ENCODE measurements at regions of chr17 and their contacts with region 1.

Region 1: DNA sequence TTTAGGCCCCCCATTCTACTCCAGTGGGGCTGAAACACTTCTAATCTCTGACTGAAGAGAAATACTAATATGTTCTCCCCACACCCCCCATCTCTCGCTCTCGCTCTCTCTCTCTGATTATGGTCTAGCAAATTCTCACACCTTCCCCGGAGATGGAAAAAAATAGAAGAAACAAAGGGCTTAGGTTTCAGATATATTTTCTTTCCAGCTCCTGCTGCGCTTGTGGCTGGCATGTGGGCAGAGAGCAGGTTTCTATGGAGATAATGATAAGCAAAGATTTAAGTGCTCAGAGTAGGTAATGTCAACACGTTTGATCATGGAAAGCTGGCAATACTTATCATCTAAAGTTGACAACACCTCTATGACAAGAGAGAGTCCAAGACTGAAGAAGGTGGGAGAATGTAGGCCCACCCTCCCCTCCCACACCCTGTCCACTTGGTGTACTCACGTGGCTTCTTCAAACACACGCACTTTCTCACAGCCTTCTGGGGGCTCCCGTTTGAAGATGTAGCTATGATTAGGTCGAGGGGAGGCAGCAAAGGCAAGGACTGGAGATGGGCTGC is 8.0 kb upstream of the SLC35B1 start:
- DNase-seq: peak; percentile 74
- H3K4me3 Mint-ChIP-seq: peak overlapping the region; percentile 27
- H3K27ac Mint-ChIP-seq: peak overlapping the region; percentile 97
- H3K4me1 Mint-ChIP-seq: peaks cover 43% of the 10 kb centered on the region
- H3K27me3 Mint-ChIP-seq: no peaks in the 10 kb centered on the region

Region 2: DNA sequence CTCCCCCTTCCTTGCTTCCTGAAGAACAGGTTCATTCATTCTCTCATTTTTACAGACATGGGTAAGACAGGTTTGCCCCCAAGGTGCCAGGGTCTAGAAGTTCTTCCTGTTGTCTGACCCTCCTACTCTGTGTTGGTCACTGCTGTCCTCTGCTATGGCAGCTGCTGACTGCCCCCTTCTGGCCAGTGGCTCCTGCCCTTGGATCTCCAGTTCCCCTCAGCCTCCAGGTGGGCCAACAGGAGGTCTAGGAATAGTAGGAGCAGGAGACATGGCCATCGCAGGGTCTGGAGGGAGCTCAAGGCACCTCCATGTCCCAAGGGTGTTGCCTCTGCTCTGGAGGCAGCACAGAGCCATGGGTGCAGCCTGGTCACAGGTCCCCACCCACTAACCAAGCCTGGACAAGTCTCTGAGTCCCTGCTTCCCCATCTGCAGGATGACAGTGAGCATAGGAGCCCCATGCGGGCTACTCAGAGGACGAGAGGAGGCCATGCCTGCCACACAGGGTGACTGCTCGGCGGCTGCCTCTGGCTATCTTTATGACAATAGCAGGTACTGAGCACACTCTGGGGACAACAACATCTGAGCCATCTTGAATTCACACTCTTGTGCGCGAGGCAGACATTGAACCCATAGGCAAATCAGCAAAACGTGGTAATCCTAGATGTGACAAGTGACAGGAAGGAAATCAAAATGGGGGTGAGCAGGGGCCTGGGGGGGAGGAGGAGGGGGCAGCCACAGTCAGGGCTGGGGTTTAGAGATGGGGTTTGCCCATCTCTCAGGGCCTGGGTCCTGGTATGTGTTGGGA is 167.1 kb before region 1 on chr17:
- CTCF ChIA-PET with region 1: no interaction called
- POLR2A ChIA-PET with region 1: no interaction called
- intact Hi-C with region 1: no loop called
- DNase-seq: peak; percentile 37
- H3K4me3 Mint-ChIP-seq: no peak overlapping the region
- H3K27ac Mint-ChIP-seq: no peak overlapping the region
- H3K4me1 Mint-ChIP-seq: no peaks in the 10 kb centered on the region
- H3K27me3 Mint-ChIP-seq: peaks cover 1% of the 10 kb centered on the region

Region 3: DNA sequence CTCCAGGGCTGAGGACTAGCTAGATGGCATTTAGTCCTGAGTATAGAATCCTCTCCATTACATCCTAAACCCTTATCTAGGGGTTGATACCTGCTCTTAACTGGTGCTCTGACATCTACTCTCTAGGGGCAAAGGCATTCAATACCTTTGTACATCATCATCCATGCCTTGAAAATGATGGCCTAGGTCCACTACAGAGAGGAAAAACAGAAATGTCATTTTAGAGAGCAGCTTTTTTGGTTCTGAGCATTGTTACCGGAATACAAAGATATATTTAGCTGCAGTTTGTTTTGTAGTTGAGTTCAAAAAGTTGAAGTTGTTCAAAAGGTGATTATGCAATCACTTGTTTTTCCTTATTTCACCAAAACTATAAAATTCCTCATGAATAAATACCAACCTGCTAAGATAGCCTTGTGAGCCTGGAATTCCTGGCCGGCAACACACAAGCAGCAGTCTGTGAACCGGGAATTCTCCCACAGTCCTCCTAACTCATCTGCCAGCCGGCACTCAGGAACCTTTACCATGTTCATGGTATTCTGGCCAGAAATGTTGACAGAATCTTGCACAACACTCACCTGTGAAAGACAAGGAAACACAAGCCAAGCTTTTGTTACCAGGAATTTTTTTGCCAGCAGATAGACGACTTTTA is 104.8 kb before region 1 on chr17:
- CTCF ChIA-PET with region 1: no interaction called
- POLR2A ChIA-PET with region 1: no interaction called
- intact Hi-C with region 1: no loop called
- DNase-seq: no peak
- H3K4me3 Mint-ChIP-seq: no peak overlapping the region
- H3K27ac Mint-ChIP-seq: no peak overlapping the region
- H3K4me1 Mint-ChIP-seq: peaks cover 5% of the 10 kb centered on the region
- H3K27me3 Mint-ChIP-seq: no peaks in the 10 kb centered on the region

Region 4: DNA sequence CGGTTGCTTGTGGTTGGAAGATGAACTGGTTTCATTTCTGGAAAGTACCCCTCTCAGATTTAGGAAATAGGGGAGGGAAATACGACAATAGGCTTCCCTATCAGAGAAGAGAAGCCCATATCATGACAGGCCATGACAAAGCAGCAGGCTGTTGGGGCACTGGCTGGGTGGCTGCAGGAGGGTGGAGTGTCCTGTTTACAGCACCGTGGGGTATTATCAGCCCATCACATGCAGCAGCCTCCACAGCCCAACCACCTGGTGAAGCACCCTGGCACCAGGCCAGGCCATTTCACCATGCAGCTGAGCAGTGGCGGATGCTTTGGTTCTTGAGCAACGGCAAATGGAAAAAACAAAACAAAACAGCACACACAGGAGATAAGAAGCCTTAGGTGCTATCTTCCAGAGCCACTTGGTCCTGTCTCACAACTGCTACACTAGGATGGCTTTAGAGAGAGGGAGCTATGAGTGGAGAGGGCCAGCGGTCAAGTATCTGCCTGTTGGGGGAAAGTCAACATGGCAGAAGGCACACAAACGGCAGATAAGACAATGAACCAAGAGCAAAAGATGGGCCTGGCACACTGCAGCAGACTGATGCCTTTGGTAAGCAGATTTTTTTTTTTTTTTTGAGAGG is 24.0 kb after region 1 on chr17:
- CTCF ChIA-PET with region 1: interaction called, 9 read pairs
- POLR2A ChIA-PET with region 1: interaction called, 50 read pairs
- intact Hi-C with region 1: loop called (anchors 1 kb)
- DNase-seq: peak; percentile 92
- H3K4me3 Mint-ChIP-seq: peak overlapping the region; percentile 85
- H3K27ac Mint-ChIP-seq: peak overlapping the region; percentile 100
- H3K4me1 Mint-ChIP-seq: peaks cover 74% of the 10 kb centered on the region
- H3K27me3 Mint-ChIP-seq: no peaks in the 10 kb centered on the region

Region 5: GRCh38 chr17:49748791-49749190 is 33.0 kb after region 1 on chr17:
- CTCF ChIA-PET with region 1: interaction called, 40 read pairs
- POLR2A ChIA-PET with region 1: interaction called, 22 read pairs
- intact Hi-C with region 1: loop called (anchors 1 kb)
- DNase-seq: peak; percentile 80
- H3K4me3 Mint-ChIP-seq: peak overlapping the region; percentile 33
- H3K27ac Mint-ChIP-seq: peak overlapping the region; percentile 94
- H3K4me1 Mint-ChIP-seq: peaks cover 81% of the 10 kb centered on the region
- H3K27me3 Mint-ChIP-seq: no peaks in the 10 kb centered on the region